ENCODE measurements at regions of chr16 and their contacts with region 1.

Region 1: DNA sequence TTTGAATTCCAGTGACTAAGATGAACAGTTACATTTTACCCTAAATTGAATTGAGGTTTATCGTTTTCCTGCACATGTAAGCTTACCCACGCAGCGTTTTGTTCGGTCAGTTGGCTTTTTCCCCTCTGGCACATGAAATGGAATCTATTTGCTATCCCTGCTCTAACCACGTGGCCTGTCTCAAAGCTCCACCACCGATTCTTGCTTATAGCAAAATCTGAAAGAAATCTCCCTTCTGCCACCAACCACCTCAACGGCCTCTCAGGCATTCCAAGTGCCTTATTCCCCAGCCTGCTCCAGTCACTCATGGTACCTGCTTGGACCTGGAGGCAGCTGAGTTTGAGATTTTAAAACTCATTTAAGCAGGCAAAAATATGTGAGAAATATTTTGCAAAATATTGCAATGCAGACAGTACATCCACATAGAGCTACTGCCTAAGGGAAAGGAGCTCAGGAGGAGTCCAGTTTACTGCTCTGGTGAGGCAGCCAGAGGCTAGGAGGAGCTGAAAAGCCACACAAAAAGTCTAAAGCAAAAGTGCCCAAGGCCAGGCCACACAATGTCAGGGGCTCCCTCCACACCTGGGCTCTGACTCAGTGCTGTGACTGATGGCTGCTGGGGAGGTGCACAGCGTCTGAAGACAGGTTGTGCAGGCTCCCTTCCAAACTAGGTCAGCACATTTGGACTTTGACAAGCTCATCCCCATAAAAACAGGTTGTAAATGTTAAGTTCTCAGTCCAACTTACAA is 26.4 kb downstream of the ARHGAP17 start:
- DNase-seq: no peak
- H3K4me3 ChIP-seq: no peak overlapping the region
- H3K27ac ChIP-seq: peak overlapping the region; percentile 36 to 90 (median 84)
- H3K4me1 ChIP-seq: peaks cover 75 to 100% (median 100%) of the 10 kb centered on the region in 6 donors
- H3K27me3 ChIP-seq: no peaks in the 10 kb centered on the region
- CTCF ChIP-seq: no peak
- POLR2A ChIP-seq: no peak

Region 2: GRCh38 chr16:25045696-25046381 is 57.1 kb after region 1 on chr16:
- intact Hi-C with region 1: loop called (anchors 10 kb)
- DNase-seq: no peak
- H3K4me3 ChIP-seq: no peak overlapping the region
- H3K27ac ChIP-seq: peak overlapping the region in 1 of 8 donors; percentile 43
- H3K4me1 ChIP-seq: peaks cover 10 to 93% (median 39%) of the 10 kb centered on the region in 6 donors
- H3K27me3 ChIP-seq: no peaks in the 10 kb centered on the region
- CTCF ChIP-seq: no peak
- POLR2A ChIP-seq: no peak

Measured in spleen (tissue), 13 donors.